PC-3 (cell line): ENCODE measurements at regions of chr2 and their contacts with region 1.

Region 1: GRCh38 chr2:84302513-84303412 is 156.3 kb downstream of the SUCLG1 start:
- DNase-seq: peak; percentile 74
- ATAC-seq: peak; percentile 82
- H3K4me3 ChIP-seq: no peak overlapping the region
- H3K27ac ChIP-seq: no peak overlapping the region
- H3K4me1 ChIP-seq: peaks cover 2% of the 10 kb centered on the region; the same call in 1 of the 2 replicates
- H3K27me3 ChIP-seq: peaks cover 21% of the 10 kb centered on the region
- CTCF ChIP-seq: peak; percentile 88

Region 2: GRCh38 chr2:84022810-84023431 is 279.8 kb before region 1 on chr2:
- CTCF ChIA-PET with region 1: interaction called, 5 read pairs
- POLR2A ChIA-PET with region 1: no interaction called
- intact Hi-C with region 1: loop called (anchors 1 kb)
- DNase-seq: peak; percentile 83
- ATAC-seq: no peak
- H3K4me3 ChIP-seq: no peak overlapping the region
- H3K27ac ChIP-seq: no peak overlapping the region
- H3K4me1 ChIP-seq: no peaks in the 10 kb centered on the region
- H3K27me3 ChIP-seq: 0 out of 2 replicates have a peak, but pooled peaks cover 5% of the 10 kb centered on the region
- CTCF ChIP-seq: peak; percentile 81